PC-3 (cell line): ENCODE measurements at regions of chr4 and their contacts with region 1.

Region 1: GRCh38 chr4:168153596-168154440 is 61.5 kb downstream of the ANXA10 start:
- DNase-seq: peak; percentile 75
- ATAC-seq: peak; percentile 56
- H3K4me3 ChIP-seq: peak overlapping the region; percentile 38; the same call in 1 of the 2 replicates
- H3K27ac ChIP-seq: peak overlapping the region; percentile 8; the same call in 1 of the 2 replicates
- H3K4me1 ChIP-seq: peaks cover 4% of the 10 kb centered on the region
- H3K27me3 ChIP-seq: no peaks in the 10 kb centered on the region
- CTCF ChIP-seq: peak; percentile 79

Region 2: DNA sequence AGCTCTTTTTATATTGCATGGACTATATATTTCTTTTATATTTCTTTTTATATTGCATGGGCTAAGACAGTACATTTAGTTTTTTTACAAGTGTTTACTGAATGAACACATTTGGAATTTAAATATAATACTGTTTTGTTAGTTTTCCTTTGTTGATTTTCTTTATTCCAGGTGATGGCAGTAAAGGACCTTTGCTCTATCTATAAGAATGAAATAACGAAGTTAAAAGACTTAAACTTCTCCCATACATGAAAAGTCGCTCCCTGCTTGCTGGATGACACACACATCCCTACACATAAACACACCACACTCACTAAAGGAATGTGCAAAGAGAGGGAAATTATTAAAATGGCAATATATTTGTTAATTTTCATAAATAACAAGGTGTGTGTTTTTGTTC is 164.0 kb before region 1 on chr4:
- CTCF ChIA-PET with region 1: no interaction called
- POLR2A ChIA-PET with region 1: no interaction called
- intact Hi-C with region 1: loop called (anchors 1 kb)
- DNase-seq: peak; percentile 48
- ATAC-seq: peak; percentile 68
- H3K4me3 ChIP-seq: no peak overlapping the region
- H3K27ac ChIP-seq: no peak overlapping the region
- H3K4me1 ChIP-seq: no peaks in the 10 kb centered on the region
- H3K27me3 ChIP-seq: no peaks in the 10 kb centered on the region
- CTCF ChIP-seq: peak; percentile 54

Region 3: DNA sequence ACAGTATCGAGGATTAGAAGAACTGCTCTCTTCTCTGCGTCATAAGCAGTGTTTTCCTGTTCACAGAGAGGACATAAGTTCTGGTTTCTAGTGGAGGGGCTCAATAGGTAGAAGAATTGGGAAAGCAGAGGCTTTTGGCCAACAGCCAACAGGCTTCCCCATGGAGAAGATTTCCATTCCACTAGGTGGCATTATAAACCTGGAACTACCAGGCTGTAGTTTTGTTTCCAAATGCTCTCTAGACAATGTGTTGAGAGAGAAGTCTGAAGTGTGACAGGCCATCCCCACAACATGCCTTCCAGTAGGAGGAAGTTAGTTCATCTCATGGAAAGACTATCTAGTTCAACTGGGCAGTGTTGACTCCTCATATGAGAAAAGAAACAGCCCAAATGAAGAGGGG is 125.2 kb before region 1 on chr4:
- CTCF ChIA-PET with region 1: no interaction called
- POLR2A ChIA-PET with region 1: no interaction called
- intact Hi-C with region 1: loop called (anchors 1 kb)
- DNase-seq: peak; percentile 63
- ATAC-seq: peak; percentile 57
- H3K4me3 ChIP-seq: peak overlapping the region; percentile 11; the same call in 1 of the 2 replicates
- H3K27ac ChIP-seq: peak overlapping the region; percentile 45
- H3K4me1 ChIP-seq: peaks cover 9% of the 10 kb centered on the region
- H3K27me3 ChIP-seq: no peaks in the 10 kb centered on the region
- CTCF ChIP-seq: peak; percentile 63

Region 4: DNA sequence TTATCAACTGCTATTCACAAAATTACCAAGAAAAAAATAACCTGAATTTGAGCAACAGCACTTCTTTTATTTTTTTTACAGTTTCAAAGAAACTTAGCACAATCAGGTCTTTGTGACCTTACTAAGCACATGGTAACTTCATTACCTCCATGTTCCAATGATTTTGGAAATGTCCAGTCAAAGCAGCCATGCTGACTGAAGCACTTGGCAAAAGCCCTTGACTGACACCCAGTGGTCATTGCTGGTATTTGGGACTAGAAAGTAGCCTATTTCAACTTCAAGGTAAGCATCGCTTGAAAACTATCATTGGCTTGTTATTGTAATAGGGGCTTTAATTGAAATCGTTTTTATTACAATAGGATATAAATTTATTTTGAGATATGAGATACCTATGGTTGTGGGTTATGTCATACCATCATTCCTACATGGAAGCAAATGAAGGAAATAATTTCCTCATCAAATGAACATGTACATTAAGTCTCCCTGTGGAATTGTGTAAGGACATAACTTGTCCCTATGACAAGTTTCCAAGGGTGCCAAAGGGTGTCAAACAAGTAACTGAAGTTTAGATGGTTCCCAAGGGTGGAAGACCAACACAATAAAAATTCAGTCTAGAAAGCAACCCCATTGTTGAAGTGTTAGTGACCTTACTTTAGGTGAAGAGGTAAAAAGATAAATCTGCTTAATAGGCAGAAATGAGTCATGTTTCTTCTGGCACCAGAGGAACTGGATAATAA is 76.7 kb before region 1 on chr4:
- CTCF ChIA-PET with region 1: interaction called, 3 read pairs
- POLR2A ChIA-PET with region 1: no interaction called
- intact Hi-C with region 1: loop called (anchors 1 kb)
- DNase-seq: peak; percentile 85
- ATAC-seq: peak; percentile 76
- H3K4me3 ChIP-seq: no peak overlapping the region
- H3K27ac ChIP-seq: peak overlapping the region; percentile 75
- H3K4me1 ChIP-seq: peaks cover 16% of the 10 kb centered on the region
- H3K27me3 ChIP-seq: no peaks in the 10 kb centered on the region
- CTCF ChIP-seq: peak; percentile 86

Region 5: DNA sequence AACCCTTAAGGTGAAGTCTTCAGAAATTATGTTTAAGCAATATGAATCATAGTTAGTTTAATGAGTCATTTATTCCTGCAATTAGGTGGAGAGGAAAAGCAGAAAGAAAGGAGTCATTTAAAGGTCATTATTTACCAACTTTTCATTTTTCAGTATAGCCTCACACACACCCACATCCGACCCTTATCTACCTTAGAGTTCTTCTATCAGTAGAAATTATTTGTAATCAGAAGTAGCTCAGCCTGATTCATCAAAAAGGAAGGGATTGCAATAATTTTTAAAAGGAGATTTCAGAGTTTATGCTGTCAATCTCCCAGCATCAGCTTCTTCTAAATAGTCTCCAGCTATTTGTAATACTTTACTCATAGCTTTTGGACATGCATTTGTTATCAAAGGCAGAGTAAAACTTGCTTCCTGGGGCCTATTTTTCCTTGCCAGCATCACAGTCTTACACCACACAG is 55.5 kb before region 1 on chr4:
- CTCF ChIA-PET with region 1: no interaction called
- POLR2A ChIA-PET with region 1: no interaction called
- intact Hi-C with region 1: loop called (anchors 1 kb)
- DNase-seq: peak; percentile 87
- ATAC-seq: peak; percentile 71
- H3K4me3 ChIP-seq: no peak overlapping the region
- H3K27ac ChIP-seq: peak overlapping the region; percentile 96
- H3K4me1 ChIP-seq: peaks cover 52% of the 10 kb centered on the region
- H3K27me3 ChIP-seq: no peaks in the 10 kb centered on the region
- CTCF ChIP-seq: no peak

Region 6: DNA sequence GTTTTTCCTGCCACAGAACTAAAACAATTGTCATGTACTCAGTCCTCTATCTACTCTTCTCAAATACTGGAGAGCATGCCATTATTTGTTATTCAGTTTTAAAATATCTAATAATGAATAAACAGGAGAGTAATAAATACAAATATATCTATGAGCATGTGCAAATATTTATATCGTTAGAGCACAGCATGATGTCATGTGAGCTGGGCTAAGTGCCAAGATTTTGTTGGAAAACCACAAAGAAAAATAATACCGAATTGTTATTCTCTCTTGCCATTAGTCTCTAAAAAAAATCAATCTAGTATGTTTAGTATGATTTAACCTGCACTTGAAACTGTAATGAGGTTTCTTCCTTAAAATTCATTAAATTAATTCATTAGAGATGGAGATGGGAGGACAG is 67.5 kb after region 1 on chr4:
- CTCF ChIA-PET with region 1: no interaction called
- POLR2A ChIA-PET with region 1: no interaction called
- intact Hi-C with region 1: no loop called
- DNase-seq: peak; percentile 72
- ATAC-seq: no peak
- H3K4me3 ChIP-seq: no peak overlapping the region
- H3K27ac ChIP-seq: peak overlapping the region; percentile 37
- H3K4me1 ChIP-seq: peaks cover 27% of the 10 kb centered on the region
- H3K27me3 ChIP-seq: no peaks in the 10 kb centered on the region
- CTCF ChIP-seq: no peak